Heart right ventricle (tissue), 16 donors: ENCODE measurements at regions of chr22 and their contacts with region 1.

Region 1: DNA sequence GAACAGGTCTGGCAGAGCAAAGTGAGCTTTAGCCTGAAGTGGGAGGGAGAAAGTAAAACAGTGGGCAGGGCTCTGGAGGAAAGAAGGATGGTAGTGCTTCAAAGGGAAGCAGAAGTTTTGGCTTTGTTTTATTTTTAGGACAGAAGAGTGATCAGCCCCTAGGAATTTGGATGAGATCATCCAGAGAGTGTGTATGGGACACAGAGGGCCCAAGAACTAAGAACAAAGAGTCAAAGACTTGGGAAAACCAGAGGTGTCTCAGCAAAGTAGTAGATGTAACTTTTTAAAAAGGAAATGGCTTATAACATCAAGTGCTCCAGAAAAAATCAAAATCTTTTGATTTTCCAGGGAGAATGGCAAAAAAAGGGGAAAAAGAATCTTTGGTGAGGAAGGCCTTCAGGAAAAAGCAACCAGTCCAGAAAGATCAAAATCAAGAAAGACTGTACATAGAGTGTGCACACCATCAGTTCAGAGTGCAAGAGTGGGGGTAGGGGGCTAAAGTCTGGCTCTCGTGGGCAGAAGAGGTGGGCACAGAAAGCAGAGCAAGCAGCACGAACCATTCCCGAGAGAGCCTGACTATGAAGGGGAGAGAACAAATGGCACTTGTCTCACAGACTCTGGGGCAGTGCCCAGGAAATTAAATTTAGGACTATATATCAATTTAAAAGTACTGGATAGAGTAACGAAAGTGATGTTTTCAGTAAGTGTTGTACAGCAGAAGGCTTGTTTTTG is 30.0 kb downstream of the MAPK1 start:
- DNase-seq: peak in 1 of 2 donors; percentile 42
- ATAC-seq: peak; percentile 88 to 97 (median 93)
- H3K4me3 ChIP-seq: peak overlapping the region in 1 of 10 donors; percentile 8
- H3K27ac ChIP-seq: peak overlapping the region; percentile 73 to 91 (median 85)
- H3K4me1 ChIP-seq: peaks cover 5 to 72% (median 57%) of the 10 kb centered on the region in 9 donors
- H3K27me3 ChIP-seq: no peaks in the 10 kb centered on the region
- CTCF ChIP-seq: no peak

Region 2: DNA sequence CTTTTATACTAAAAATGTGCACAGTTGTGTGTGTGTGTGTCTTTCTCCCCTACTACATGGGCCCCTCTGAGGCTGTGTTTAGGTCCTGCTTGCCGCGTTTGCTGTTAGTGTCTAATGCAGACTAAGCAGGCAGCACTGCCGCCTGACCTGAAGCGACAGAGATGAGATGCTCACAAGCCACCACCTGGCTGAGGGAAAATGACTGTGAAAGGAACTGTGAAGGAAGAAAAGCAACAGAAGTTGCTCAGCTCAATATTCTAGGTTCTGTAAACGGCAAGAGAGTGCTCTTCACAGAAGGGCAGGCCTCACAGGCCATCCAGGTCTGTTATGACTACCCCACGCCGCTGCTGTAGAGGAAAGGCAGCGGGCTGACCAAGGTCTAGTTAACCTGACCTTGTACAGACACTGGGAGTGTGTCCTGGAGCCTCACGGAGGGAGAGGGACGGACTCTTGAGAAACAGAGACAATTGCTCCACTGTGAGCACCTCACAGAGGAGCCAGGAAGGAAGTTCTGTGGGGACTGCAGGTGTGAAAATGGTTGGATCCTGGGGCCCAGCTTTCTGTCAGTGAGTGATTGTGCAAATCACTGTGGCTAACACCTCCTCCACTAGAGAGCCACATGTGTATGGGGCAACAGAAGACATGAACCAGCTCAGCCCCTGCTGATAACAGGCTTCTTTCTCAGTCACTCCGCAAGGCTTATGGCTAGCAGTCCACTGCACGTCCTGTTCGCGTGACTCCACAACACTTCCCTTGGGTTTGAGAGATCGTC is 70.5 kb before region 1 on chr22:
- intact Hi-C with region 1: no loop called
- DNase-seq: no peak
- ATAC-seq: peak in 5 of 8 donors; percentile 20 to 34 (median 23)
- H3K4me3 ChIP-seq: no peak overlapping the region
- H3K27ac ChIP-seq: peak overlapping the region in 1 of 10 donors; percentile 72
- H3K4me1 ChIP-seq: peaks cover 0 to 16% (median 0%) of the 10 kb centered on the region in 9 donors
- H3K27me3 ChIP-seq: no peaks in the 10 kb centered on the region
- CTCF ChIP-seq: no peak

Region 3: DNA sequence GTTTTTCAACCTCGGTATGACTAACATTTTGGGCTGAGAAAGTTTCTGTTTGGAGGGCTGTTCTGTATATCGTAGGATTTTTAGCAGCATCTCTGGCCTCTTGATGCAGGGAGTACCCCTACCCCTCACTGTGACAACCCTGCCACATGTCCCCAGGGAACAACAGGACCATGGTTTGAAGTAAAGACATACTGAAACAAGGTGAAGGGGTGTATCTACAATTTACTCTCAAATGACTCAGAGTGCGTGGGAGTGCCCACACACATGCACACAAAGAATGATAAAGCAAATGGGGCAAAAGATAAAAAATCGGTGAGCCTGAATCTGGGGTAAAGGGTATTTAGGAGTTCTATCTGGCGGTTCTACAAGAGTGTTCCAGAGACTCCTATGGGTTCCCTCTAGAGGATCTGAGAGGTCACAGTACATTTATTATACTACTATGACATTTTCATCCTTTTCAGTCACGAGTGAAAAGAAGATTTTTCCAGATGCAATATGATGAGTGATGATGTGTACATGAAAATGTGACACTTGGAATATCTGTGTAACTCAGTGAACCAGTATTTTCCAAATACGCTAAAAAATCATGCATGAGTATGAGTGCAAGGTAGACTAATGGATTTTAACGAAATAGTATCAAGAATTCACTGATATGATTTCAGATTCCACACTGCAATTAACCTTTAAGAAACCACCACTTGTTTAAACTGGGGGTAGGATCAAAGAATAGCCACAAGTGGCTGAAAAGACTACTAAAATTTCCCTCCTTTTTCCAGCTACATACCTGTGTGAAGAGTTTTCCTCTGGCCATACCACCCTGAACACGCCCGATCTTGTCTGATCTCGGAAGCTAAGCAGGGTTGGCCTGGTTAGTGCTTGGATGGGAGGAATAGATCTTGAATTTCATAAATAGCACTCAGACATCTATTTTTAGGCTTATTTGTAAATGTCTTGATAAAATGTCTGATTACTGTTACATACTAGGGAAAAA is 45.5 kb before region 1 on chr22:
- intact Hi-C with region 1: loop called in 1 of 10 experiments (anchors 5 kb)
- DNase-seq: no peak
- ATAC-seq: no peak
- H3K4me3 ChIP-seq: no peak overlapping the region
- H3K27ac ChIP-seq: no peak overlapping the region
- H3K4me1 ChIP-seq: peaks cover 0 to 13% (median under 1%) of the 10 kb centered on the region in 9 donors
- H3K27me3 ChIP-seq: no peaks in the 10 kb centered on the region
- CTCF ChIP-seq: no peak